CD4-positive, alpha-beta T cell (primary cell): ENCODE measurements at regions of chr11 and their contacts with region 1.

Region 1: DNA sequence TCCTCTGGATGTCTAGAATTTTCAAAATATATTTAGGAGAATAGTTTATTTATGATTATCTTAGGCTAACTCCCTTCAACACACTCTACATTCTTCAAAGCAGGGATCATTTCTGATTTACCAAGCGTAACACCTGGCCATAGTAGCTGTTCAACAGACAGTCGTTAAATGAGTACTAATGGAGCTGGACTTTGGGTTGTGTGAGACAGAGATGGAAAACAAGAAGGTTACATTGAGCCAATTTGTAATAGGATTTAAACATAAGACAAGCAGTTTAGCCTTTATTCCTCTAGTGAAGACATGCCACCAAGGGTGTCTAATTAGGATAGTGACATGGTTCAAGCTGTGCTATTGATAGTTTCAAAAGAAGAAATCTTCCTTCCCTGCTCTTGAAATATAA is 129.1 kb upstream of the ANO3 start:
- DNase-seq: no peak
- ATAC-seq: no peak
- H3K4me3 ChIP-seq: no peak overlapping the region
- H3K4me3 Mint-ChIP-seq: no peak overlapping the region
- H3K27ac ChIP-seq: no peak overlapping the region
- H3K27ac Mint-ChIP-seq: no peak overlapping the region
- H3K4me1 ChIP-seq: no peaks in the 10 kb centered on the region
- H3K4me1 Mint-ChIP-seq: no peaks in the 10 kb centered on the region
- H3K27me3 ChIP-seq: no peaks in the 10 kb centered on the region
- H3K27me3 Mint-ChIP-seq: no peaks in the 10 kb centered on the region
- CTCF ChIP-seq: no peak

Region 2: DNA sequence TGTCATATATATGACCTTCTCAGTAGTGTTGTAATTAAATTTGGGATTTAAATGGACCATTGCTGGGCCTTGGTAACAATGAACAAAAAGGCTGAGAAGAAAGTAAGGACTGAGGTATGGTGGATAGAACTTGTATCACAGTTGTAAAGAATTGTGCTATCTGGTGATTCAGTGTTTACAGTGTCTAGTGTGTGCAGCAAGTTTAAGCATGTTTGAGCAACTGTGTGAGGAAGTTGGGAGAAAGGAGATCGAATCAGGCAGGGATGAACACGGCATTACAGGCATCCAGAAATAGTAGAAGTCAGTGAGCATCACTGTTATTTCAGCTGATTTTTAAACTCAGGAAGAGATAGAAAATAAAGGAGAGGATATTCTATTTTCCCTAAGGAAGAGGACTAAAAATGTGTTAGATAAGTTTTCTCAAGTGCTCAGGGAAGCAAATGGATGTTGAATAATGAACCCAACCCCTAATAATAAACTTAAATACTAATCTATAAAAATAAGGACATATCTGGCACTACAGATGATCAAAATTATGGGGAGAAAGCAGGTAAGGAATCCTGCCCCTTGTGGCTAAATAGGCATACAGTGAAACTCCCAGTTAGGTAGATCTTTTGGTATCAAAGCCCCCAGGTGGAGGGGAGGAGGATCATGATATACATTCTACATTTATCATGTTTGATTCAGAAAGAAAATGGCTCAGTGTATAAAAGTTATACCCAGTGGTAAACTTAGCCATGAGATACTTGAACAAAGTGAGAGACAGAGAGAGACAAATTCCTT is 231.9 kb before region 1 on chr11:
- CTCF ChIA-PET with region 1: no interaction called
- POLR2A ChIA-PET with region 1: no interaction called
- intact Hi-C with region 1: no loop called
- DNase-seq: no peak
- ATAC-seq: no peak
- H3K4me3 ChIP-seq: no peak overlapping the region
- H3K4me3 Mint-ChIP-seq: no peak overlapping the region
- H3K27ac ChIP-seq: no peak overlapping the region
- H3K27ac Mint-ChIP-seq: no peak overlapping the region
- H3K4me1 ChIP-seq: no peaks in the 10 kb centered on the region
- H3K4me1 Mint-ChIP-seq: no peaks in the 10 kb centered on the region
- H3K27me3 ChIP-seq: no peaks in the 10 kb centered on the region
- H3K27me3 Mint-ChIP-seq: no peaks in the 10 kb centered on the region
- CTCF ChIP-seq: no peak

Region 3: GRCh38 chr11:26158251-26158650 is 44.5 kb before region 1 on chr11:
- CTCF ChIA-PET with region 1: no interaction called
- POLR2A ChIA-PET with region 1: no interaction called
- intact Hi-C with region 1: loop called in 1 of 2 experiments (anchors 2 kb)
- DNase-seq: no peak
- ATAC-seq: no peak
- H3K4me3 ChIP-seq: no peak overlapping the region
- H3K4me3 Mint-ChIP-seq: no peak overlapping the region
- H3K27ac ChIP-seq: no peak overlapping the region
- H3K27ac Mint-ChIP-seq: no peak overlapping the region
- H3K4me1 ChIP-seq: no peaks in the 10 kb centered on the region
- H3K4me1 Mint-ChIP-seq: no peaks in the 10 kb centered on the region
- H3K27me3 ChIP-seq: no peaks in the 10 kb centered on the region
- H3K27me3 Mint-ChIP-seq: no peaks in the 10 kb centered on the region
- CTCF ChIP-seq: no peak

Region 4: DNA sequence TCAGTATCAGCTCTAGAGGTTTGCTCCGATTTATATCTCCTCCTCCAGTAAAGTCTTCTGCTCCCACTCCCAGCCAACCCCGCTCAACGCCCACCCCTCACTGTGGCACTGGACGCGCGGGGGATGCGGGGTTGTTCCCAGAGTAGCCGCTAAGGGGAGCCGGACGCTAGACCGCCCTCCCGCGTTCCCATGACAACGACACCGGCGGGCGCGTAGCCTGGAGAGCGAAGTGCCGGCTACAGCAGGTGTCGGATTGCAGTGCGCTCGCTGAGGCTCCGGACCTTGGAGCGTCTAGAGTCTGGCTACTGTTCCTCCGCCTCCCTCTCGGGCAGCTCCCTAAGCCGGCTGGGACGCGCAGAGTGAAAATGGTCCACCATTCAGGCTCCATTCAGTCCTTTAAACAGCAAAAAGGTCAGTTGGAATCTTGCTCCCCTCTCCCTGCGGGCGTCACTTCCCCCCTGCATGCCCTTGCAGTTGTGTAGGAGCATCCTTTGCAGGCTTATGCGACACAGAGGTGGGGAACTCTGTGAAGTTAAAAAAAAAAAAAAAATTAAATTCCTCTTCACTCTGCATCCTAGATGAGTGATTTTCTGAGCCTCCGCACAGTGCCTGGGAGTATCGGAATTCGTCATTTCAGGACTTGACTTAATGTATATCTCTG is 129.3 kb after region 1 on chr11 and contains the start of gene ANO3:
- CTCF ChIA-PET with region 1: no interaction called
- POLR2A ChIA-PET with region 1: no interaction called
- intact Hi-C with region 1: no loop called
- DNase-seq: no peak
- ATAC-seq: no peak
- H3K4me3 ChIP-seq: no peak within 1 kb of the TSS
- H3K4me3 Mint-ChIP-seq: no peak within 1 kb of the TSS
- H3K27ac ChIP-seq: no peak within 1 kb of the TSS
- H3K27ac Mint-ChIP-seq: no peak within 1 kb of the TSS
- H3K4me1 ChIP-seq: no peaks in the 10 kb centered on the region
- H3K4me1 Mint-ChIP-seq: no peaks in the 10 kb centered on the region
- H3K27me3 ChIP-seq: peaks cover 0 to 3% of the 10 kb centered on the region in 2 experiments
- H3K27me3 Mint-ChIP-seq: peaks cover 27% of the 10 kb centered on the region
- CTCF ChIP-seq: no peak
- total RNA-seq, gene ANO3: not detected